PC-3 (cell line): ENCODE measurements at regions of chr1 and their contacts with region 1.

Region 1: GRCh38 chr1:1777950-1778662 is at the start of gene NADK:
- DNase-seq: peak; percentile 90
- ATAC-seq: peak; percentile 48
- H3K4me3 ChIP-seq: peak within 1 kb of the TSS; percentile 97
- H3K27ac ChIP-seq: peak within 1 kb of the TSS; percentile 78
- H3K4me1 ChIP-seq: peaks cover 44% of the 10 kb centered on the region
- H3K27me3 ChIP-seq: no peaks in the 10 kb centered on the region
- CTCF ChIP-seq: no peak
- total RNA-seq, gene NADK: 130 and 165 TPM in 2 replicates

Region 2: GRCh38 chr1:1763657-1764616 is 14.2 kb before region 1 on chr1:
- CTCF ChIA-PET with region 1: no interaction called
- POLR2A ChIA-PET with region 1: interaction called, 3 read pairs
- intact Hi-C with region 1: loop called (anchors 2 kb)
- DNase-seq: peak; percentile 10
- ATAC-seq: no peak
- H3K4me3 ChIP-seq: no peak overlapping the region
- H3K27ac ChIP-seq: peak overlapping the region; percentile 71
- H3K4me1 ChIP-seq: peaks cover 32% of the 10 kb centered on the region
- H3K27me3 ChIP-seq: no peaks in the 10 kb centered on the region
- CTCF ChIP-seq: 0 out of 2 replicates have a peak, but pooled peaks have one; percentile 23

Region 3: DNA sequence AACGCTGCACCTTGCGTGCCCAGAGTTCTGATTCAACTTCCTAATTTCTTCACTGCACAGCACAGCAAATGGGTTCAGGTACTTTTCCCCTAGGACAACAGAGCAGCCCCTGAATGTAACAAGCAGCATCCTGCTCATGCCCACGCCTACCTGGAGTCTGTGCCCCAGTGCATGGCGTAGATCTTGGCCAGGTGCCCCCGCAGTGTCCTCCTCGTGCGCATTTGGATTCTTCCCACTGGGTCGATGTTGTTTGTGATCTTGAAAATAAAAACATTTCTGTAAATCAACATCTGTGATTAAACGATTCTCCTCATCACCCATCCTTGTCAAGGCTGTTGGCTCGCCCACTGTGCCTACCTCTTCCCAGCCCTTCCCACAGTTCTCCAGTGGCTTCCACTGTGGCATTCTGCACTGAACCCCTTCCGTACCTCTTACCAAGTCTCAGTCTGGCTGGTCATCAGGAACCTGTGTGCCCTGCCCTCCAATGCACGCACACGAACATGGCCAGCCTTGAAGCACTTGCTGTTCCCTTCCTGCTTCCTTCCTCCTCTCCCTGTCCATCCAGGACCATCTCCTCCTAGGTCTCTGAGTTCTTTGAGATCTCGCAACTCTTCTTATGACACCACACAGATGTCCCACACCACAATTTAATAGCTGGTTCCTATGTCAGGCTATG is 37.6 kb after region 1 on chr1:
- CTCF ChIA-PET with region 1: interaction called, 10 read pairs
- POLR2A ChIA-PET with region 1: no interaction called
- intact Hi-C with region 1: no loop called
- DNase-seq: no peak
- ATAC-seq: no peak
- H3K4me3 ChIP-seq: no peak overlapping the region
- H3K27ac ChIP-seq: no peak overlapping the region
- H3K4me1 ChIP-seq: no peaks in the 10 kb centered on the region
- H3K27me3 ChIP-seq: no peaks in the 10 kb centered on the region
- CTCF ChIP-seq: no peak